Activated CD4-positive, alpha-beta T cell treated with anti-CD3 and anti-CD28 coated beads for 36 hours (primary cell): ENCODE measurements at regions of chrX and their contacts with region 1.

Region 1: DNA sequence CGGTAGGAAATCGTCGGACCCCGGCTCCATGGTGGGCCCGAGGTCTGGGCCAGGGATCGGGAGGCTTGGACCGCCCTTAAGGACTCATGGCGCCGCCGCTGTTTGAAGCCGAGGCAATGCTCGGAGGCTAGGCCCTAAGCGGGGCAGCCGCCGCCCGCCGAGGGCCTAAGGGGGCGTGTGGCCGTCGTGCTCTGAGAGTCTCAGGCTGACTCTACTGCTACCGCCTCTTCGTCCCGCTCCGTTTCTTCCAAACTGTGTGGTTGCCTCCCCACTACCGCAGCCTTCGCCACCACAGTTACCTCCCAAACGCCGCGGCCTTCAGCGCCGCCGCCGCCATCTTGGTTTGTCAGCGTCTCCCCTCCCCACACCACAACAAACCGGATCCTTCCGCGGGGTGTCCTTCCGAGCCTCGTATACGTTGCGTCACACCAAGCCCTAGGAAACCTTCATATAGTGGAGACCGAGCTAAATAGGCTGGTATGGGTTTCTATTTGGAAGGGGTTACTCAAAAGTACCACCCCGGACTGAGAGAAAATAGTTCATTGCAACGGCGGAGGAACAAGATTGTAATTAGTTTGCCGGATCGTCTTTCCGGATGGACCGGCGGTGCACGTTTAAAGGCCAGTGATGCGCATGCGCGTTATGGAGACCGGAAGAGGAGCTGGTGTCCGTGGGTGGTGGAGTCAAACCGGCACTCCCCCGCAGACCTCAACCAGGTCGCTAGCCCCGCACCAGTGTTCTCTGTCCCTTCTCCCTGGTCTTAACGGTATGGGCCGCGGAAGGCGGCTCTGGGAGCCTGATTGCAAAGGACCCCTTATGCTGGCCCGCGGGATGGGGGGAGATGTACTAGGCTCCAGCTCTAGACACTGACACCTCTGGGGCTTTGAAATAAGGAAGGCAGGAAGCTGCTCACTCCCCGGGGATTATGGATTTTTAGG is at the start of gene KDM5C:
- DNase-seq: peak; percentile 90
- ATAC-seq: peak; percentile 79
- H3K4me3 Mint-ChIP-seq: peak within 1 kb of the TSS; percentile 79
- H3K27ac Mint-ChIP-seq: peak within 1 kb of the TSS; percentile 92
- H3K4me1 Mint-ChIP-seq: peaks cover 29% of the 10 kb centered on the region
- H3K27me3 Mint-ChIP-seq: no peaks in the 10 kb centered on the region
- total RNA-seq, gene KDM5C: 84.6 to 96.5 TPM

Region 2: DNA sequence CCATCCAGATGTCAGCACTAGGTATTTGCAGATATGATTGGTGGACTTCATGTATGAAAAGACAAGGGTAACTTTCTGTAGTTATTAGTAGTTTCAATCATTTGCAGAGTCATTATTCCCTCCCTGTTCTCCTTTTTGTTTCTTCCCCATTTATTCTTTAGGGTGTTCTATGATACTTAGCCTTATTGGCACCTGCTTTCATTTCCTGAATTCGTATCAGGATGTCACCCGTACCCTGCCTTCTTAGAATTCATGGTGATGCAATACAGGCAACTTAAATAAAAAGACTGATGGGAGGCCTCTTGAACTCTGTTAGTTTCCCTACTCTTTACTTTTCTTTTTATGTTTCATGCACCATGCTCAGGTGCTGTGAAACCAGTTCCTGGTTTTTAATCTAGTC is 1307.5 kb before region 1 on chrX:
- CTCF ChIA-PET with region 1: no interaction called
- POLR2A ChIA-PET with region 1: no interaction called
- intact Hi-C with region 1: no loop called
- DNase-seq: no peak
- ATAC-seq: no peak
- H3K4me3 Mint-ChIP-seq: no peak overlapping the region
- H3K27ac Mint-ChIP-seq: no peak overlapping the region
- H3K4me1 Mint-ChIP-seq: no peaks in the 10 kb centered on the region
- H3K27me3 Mint-ChIP-seq: peaks cover 4% of the 10 kb centered on the region

Region 3: DNA sequence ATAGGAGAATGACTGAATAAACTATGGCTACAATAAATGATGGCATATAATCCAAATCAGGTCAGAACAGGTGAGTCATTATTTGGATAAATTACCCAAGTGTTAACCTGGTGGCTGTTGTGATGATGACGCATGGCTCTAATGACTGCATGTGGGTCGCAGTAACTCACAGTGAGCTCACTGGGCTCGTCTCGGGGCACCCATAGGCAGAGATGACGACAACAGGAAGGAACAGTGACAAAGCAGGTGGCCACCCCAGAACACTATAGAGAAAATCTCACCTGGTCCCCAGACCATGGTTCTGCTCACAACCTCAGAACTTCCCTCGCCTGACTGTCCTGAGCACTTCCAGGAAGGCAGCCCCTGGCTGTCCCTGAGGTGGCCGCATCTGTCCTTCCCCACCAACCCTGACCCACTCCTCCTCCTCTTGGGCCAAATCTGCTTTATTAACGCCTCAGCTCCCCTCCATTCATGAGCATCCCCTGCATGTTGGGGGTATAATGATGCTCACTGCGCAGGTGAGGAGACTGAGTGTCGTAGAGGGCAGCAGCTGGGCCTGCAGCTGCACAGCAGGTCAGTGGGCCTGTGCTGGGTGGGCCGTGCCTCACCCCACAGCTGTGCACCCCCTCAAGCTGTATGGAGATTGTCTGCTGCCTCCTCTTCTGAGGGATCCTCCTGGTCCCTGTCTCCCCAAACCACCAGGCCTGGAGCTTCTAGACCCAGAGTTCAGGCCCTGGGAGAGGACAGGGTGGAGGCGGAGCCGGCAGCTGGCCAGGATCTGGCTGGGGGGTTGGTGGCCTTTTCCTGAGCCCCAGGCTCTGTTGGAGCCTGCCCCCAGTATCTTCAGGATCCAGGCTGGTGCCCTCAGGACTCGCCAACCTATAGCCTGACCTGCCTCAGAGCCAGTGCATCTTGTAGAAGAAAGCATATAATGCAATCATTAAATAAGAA is 235.9 kb before region 1 on chrX:
- CTCF ChIA-PET with region 1: no interaction called
- POLR2A ChIA-PET with region 1: no interaction called
- intact Hi-C with region 1: no loop called
- DNase-seq: peak; percentile 42
- ATAC-seq: peak; percentile 79
- H3K4me3 Mint-ChIP-seq: no peak overlapping the region
- H3K27ac Mint-ChIP-seq: no peak overlapping the region
- H3K4me1 Mint-ChIP-seq: peaks cover 32% of the 10 kb centered on the region
- H3K27me3 Mint-ChIP-seq: no peaks in the 10 kb centered on the region

Region 4: GRCh38 chrX:53081925-53082772 is 143.0 kb before region 1 on chrX and contains the start of gene TSPYL2:
- CTCF ChIA-PET with region 1: no interaction called
- POLR2A ChIA-PET with region 1: interaction called, 5 read pairs
- intact Hi-C with region 1: loop called in 1 of 2 experiments (anchors 2 kb)
- DNase-seq: peak; percentile 96
- ATAC-seq: peak; percentile 91
- H3K4me3 Mint-ChIP-seq: peak within 1 kb of the TSS; percentile 91
- H3K27ac Mint-ChIP-seq: peak within 1 kb of the TSS; percentile 95
- H3K4me1 Mint-ChIP-seq: peaks cover 46% of the 10 kb centered on the region
- H3K27me3 Mint-ChIP-seq: no peaks in the 10 kb centered on the region
- total RNA-seq, gene TSPYL2: 56.7 to 73.3 TPM

Region 5: DNA sequence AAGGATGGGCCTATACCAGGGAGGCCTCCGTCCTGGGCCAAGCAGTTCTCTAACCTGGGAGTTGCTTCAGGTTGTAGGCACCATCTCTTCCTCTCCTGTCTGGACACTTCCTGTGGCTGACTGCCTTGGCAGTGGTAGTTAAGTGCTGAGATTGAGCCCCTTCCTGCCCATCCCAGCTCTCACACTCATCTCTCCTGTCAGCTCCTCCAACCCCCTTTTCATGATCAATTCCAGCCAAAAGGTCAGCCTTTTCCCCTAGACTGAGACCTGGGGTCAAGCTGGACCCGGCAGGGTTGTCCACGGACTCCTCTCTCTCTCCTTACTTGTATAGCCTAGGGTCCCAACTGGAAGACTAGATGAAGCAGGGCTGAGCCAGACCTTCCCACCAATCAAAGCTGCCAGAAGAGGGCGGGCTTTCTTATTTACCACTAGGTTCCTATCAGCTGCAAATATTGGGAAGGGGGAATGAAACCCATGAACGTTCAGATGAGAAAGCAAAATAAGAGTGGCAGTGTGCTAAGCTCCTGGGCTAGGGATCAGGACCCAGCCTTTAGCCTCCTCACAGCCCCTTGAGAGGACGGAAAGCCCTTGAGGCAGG is 34.7 kb before region 1 on chrX:
- CTCF ChIA-PET with region 1: no interaction called
- POLR2A ChIA-PET with region 1: interaction called, 4 read pairs
- intact Hi-C with region 1: loop called in 1 of 2 experiments (anchors 1 kb)
- DNase-seq: no peak
- ATAC-seq: no peak
- H3K4me3 Mint-ChIP-seq: no peak overlapping the region
- H3K27ac Mint-ChIP-seq: no peak overlapping the region
- H3K4me1 Mint-ChIP-seq: peaks cover 25% of the 10 kb centered on the region
- H3K27me3 Mint-ChIP-seq: no peaks in the 10 kb centered on the region

Region 6: DNA sequence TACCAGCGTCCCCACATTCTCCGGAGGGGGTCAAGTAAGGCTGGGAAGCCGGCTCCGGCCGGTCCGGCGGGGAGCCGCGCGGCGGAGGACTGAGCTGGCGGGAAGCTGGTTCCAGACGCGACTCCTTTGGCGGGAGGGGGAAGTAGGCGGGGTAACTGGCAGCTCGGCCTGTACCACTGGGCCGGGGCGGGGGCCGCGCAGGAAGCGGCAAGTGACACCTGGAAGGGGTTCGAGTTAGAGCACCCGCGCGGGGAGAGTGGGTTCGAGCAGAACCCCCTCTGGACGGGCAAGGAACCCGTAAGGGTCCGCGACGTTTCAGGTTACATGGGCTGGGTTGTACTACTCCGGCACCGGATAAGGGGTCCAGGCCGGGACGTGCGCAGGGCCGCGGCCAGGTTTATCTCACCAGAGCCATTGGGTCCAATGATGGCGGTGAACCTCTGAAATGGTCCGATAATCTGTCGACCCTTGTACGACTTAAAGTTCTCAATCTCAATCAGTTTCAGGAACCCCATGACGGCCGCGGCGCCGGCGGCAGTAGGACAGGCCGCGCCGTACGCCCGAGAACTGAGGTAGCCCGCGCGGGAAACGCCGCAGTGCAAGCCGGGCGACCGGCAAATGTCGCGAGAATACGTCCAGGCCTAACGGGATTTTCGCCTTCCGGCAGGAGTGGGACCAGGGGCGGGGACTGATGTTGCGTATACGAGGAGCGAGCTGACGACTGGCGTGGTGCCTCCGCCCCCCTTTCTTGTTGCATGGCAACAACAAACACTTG is 197.1 kb after region 1 on chrX and contains the start of gene SMC1A:
- CTCF ChIA-PET with region 1: no interaction called
- POLR2A ChIA-PET with region 1: no interaction called
- intact Hi-C with region 1: loop called in 1 of 2 experiments (anchors 1 kb)
- DNase-seq: peak; percentile 96
- ATAC-seq: peak; percentile 91
- H3K4me3 Mint-ChIP-seq: peak within 1 kb of the TSS; percentile 94
- H3K27ac Mint-ChIP-seq: peak within 1 kb of the TSS; percentile 97
- H3K4me1 Mint-ChIP-seq: peaks cover 27% of the 10 kb centered on the region
- H3K27me3 Mint-ChIP-seq: no peaks in the 10 kb centered on the region
- total RNA-seq, gene SMC1A: 155 to 190 TPM

Region 7: DNA sequence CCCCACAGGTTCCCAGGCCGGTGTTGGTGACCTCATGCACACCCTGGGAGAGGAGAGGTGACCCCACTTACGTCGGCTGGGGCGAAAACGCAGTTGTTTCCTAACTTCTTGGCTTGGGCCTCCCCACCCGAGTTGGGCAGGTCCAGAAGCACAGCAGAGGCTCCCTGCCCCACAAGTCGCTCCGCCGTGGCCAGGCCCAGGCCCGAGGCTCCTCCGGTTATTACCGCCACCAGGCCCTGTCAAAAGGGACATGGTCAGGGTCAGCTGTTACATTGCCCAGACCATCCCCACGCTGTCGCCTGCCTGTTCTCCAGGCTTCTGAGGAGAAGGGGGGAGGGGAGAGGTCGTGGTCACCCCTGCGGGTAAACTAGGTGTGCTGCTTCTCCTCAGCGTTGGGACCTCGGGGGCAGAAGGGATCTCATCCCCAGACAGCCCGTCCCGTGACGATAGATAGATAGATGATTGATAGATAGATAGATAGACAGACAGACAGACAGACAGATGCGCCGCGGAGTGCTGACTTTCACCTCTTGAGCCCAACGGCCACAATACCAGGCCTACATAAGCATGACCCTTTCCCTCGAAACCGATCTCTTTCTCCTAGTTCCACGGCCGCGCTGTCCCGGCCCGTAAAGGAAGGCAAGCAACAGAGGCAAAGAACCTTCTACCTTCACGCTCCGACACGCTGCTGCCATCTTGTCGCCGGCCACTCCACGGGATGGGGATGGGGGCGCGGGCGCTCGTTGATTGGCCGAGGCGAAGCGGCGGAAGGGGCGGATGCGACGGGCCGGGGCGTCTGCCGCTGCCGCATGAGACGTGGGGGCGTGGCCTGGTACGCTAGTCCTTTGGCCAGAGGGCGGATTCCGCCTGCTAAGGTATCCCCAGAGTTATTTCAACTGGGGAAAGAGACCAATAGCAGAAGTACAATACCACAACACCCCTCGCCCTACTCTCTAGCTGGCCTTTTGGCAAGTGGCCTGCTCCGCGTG is 208.8 kb after region 1 on chrX and contains the start of gene HSD17B10:
- CTCF ChIA-PET with region 1: no interaction called
- POLR2A ChIA-PET with region 1: no interaction called
- intact Hi-C with region 1: loop called in 1 of 2 experiments (anchors 1 kb)
- DNase-seq: peak; percentile 93
- ATAC-seq: peak; percentile 95
- H3K4me3 Mint-ChIP-seq: peak within 1 kb of the TSS; percentile 98
- H3K27ac Mint-ChIP-seq: peak within 1 kb of the TSS; percentile 92
- H3K4me1 Mint-ChIP-seq: peaks cover 27% of the 10 kb centered on the region
- H3K27me3 Mint-ChIP-seq: peaks cover 2% of the 10 kb centered on the region
- total RNA-seq, gene HSD17B10: 89.0 to 92.7 TPM